Activated T-helper 2 cell treated with anti-CD3 and anti-CD28 coated beads, Interferon-gamma antibody, Interleukin-2, Interleukin-4, amounts not matched to agents 10 μg/mL and 5 μg/mL and 100 μg/mL, durations not matched to agents 14 hours and 24 hours and 36 hours (primary cell): ENCODE measurements at regions of chr13 and their contacts with region 1.

Region 1: DNA sequence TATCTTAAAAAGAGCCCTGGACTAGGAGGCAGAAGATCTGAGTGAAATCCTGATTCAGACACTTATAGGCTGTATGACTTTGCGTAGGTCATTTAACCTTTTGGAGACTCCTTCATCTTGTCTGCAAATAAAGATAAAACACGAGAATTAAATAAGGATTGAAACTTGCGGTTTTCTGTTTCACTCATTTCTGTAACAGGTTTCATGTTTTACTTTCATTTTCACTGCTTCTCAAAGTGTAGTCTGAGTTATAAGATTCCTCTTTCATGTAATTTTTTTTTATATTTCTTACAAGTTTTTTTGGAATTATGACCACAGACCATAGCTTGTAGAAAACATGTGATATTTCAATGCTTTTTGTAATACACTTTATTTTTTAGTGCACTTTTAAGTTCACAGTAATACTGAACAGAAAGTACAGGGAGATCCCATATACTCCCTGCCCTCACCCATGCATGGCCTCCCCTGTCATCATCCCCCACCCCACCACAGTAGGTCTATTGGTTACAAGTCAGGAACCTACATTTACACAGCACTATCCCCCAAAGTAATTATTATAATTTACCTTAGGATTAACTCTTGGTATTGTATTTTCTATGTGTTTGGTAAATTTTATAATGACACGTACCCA is 174.6 kb downstream of the ITGBL1 start:
- DNase-seq: peak; percentile 13
- H3K4me3 Mint-ChIP-seq: no peak overlapping the region
- H3K27ac Mint-ChIP-seq: peak overlapping the region; percentile 66
- H3K4me1 Mint-ChIP-seq: peaks cover 36% of the 10 kb centered on the region
- H3K27me3 Mint-ChIP-seq: peaks cover 34% of the 10 kb centered on the region

Region 2: DNA sequence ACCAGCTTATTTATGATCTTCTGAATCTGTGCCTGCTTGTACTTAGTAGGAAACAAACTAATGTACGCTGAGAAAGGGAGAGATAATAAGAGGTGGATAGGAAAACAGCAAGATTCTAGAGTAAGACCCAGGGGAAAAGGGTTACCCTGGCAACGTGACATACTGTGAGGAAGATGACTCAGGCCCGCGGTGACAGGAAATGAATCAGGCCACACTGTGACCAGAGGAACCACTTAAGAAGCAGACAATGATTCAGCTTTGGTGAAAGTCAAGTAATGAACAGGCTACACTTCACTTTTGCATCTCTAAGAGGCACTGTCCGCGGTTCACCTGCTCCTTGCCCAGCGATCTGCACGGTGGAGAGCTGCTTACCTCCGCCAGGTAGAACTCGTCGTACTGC is 369.0 kb before region 1 on chr13:
- intact Hi-C with region 1: loop called (anchors 5 kb)
- DNase-seq: peak; percentile 32
- H3K4me3 Mint-ChIP-seq: no peak overlapping the region
- H3K27ac Mint-ChIP-seq: peak overlapping the region; percentile 2
- H3K4me1 Mint-ChIP-seq: peaks cover 11% of the 10 kb centered on the region
- H3K27me3 Mint-ChIP-seq: peaks cover 10% of the 10 kb centered on the region

Region 3: GRCh38 chr13:101529422-101529821 is 97.6 kb before region 1 on chr13:
- intact Hi-C with region 1: loop called (anchors 1 kb)
- DNase-seq: no peak
- H3K4me3 Mint-ChIP-seq: no peak overlapping the region
- H3K27ac Mint-ChIP-seq: no peak overlapping the region
- H3K4me1 Mint-ChIP-seq: peaks cover 3% of the 10 kb centered on the region
- H3K27me3 Mint-ChIP-seq: peaks cover 8% of the 10 kb centered on the region

Region 4: DNA sequence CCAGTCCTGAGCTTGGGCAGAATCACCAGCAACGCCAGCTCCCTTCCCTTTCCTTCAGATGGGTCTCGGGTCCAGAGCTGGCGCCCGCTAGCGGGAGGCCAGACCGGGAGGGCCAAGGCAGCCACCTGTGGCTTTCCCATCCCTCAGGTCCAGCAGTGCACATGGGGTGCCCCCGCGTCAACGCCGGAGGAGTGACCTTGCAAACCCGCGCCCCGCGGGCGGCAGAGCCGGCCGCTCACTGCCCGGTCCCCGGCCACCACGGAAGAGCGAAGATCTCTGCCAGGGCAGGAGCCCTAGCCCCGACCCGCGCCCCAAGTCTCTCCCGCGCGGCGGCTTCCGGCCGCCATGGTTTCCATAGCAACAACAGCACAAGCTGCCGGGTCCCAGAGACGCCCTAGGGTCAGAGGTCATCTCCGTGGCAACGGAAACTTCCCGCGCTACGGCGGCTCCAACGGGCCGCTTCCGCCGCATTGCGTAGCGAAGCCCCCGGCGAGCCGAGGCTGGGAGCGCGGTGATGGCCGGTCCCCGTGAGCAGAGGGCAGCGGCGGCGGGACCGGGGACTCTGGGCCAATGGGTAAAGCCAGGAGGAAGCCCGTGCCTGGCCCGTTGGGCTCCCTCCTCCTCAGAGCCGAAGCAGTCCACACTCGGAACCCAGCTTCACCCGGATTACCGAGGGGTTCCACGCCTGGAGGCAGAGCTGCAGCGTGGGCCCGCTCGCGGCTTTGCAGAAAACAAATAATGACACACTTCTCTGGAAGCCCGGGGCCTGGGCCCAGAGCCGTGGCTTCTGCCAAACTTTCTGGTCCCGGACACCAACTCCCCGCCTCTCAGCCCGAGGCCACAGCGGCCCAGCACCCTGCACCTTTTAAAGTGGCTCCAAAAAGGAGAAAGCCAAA is 767.4 kb after region 1 on chr13:
- intact Hi-C with region 1: loop called (anchors 5 kb)
- DNase-seq: peak; percentile 94
- H3K4me3 Mint-ChIP-seq: peak overlapping the region; percentile 86
- H3K27ac Mint-ChIP-seq: peak overlapping the region; percentile 84
- H3K4me1 Mint-ChIP-seq: peaks cover 26% of the 10 kb centered on the region
- H3K27me3 Mint-ChIP-seq: peaks cover 17% of the 10 kb centered on the region

Region 5: DNA sequence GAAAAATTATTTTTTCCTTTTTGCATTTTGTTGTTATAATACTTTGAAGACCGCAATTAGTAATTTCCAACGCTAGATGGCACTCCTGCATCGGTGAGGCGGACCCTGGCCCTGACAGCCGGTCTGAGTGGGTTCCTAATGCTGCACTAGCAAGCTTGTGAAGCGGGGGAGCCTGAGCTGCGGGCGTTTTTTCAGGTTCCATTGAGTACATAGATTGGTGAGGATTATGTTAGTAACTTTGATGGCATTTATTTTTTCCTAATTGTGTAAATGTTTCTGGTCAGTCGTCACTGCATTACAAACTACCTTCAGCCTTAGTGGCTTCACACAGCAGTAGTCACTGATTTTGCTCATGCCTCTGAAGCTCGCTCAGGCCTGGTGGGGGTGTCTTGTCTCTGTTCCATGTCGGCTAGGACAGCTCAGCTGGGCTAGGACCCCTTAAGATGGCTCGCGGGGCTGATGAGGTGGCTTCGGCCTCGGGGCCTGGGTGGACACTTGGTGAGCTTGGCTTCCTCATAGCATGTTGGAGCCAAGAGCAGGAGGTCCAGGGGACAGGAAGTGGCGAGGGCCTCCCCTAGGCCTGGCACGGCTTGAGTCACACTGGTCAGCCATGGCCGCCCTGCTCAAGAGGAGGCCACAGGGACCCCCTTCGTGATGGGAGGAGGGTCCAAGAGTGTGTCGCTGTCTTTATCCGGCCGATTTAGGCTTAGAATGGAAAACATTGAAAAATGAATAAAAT is 1243.8 kb after region 1 on chr13:
- intact Hi-C with region 1: loop called (anchors 2 kb)
- DNase-seq: no peak
- H3K4me3 Mint-ChIP-seq: no peak overlapping the region
- H3K27ac Mint-ChIP-seq: peak overlapping the region; percentile 35
- H3K4me1 Mint-ChIP-seq: peaks cover 33% of the 10 kb centered on the region
- H3K27me3 Mint-ChIP-seq: no peaks in the 10 kb centered on the region